ENCODE measurements at regions of chr2 and their contacts with region 1.

Region 1: DNA sequence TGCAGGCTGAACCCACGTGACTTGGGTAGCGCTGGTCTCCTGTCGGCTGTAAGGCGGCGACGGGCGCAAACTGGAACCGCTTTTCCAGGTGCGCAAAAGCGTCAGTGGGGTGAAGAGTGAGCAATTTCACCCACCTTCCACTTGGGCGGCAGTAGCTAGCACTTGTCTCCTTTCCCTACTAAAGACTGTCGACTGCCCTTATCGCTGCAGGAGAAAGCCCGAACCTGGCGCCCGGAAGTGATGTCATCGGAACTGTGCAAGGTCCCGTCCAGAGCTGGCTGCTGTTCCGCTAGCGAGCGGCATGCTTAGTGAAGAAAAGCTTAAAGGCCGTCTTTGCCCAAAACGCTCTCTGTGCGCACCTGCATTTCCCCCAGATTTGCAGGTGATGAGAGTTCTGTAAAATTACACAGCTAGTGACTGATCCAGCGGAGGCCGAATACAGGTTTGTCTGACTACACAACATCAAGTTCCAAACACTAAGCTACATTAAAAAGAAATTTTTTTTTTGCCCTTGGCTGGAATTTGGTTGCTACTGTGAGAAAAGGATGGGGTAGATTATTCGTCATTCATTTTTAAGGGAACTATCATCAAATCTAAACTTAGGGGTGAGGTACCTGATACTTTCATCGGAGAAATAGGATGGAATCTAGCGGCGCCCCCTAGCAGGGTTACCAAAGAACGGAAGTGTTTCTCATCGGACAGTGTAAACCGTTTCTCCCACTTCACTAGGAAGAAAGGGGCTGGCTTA is at the start of gene OSGEPL1:
- DNase-seq: peak; percentile 99
- ATAC-seq: peak; percentile 99
- H3K4me3 ChIP-seq: peak within 1 kb of the TSS; percentile 59 to 86 (median 83)
- H3K27ac ChIP-seq: peak within 1 kb of the TSS; percentile 82
- H3K4me1 ChIP-seq: peaks cover 20% of the 10 kb centered on the region
- H3K27me3 ChIP-seq: no peaks in the 10 kb centered on the region
- CTCF ChIP-seq: peak; percentile 76
- EP300 ChIP-seq: no peak; a peak in 2 of 4 replicates
- POLR2A ChIP-seq: peak; percentile 93 to 97
- RAD21 ChIP-seq: 0 out of 2 replicates have a peak, but pooled peaks have one; percentile 47
- total RNA-seq, gene OSGEPL1: 10.2 and 11.1 TPM in 2 replicates

Region 2: DNA sequence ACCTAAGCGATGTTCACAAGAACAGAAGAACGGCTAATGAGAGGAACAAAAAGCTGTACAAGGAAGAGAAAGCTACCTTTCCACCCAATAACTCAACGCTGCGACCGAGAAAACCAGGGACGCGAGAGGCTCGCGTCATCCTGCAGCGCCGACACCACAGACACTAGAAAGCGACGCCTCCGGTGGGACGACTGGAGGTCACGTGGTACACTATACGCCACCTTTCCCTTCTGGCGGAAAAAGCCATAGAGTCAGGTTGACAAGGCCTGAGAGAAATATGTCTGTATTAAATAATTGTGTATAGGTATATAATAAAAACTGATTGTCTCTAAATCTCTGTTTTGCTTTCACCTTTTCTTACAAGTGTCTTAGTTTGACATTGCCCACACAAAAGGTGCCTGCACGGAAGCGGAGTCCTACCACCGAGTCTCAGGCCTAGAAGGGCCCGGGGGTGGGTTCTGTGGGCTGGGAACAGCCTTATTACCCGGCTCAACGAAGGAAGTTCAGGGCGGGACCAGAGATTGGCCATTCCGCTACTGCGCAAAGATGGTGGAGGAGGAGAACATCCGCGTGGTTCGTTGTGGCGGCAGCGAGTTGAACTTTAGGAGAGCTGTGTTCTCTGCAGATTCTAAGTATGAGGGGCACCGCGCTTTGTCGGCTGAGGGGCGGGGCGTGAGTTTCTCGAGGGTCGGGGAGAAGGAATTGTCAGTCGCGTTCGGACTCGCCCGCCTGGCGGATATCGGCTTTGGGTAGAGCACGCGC is 321.6 kb before region 1 on chr2 and contains the start of gene WDR75:
- CTCF ChIA-PET with region 1: no interaction called
- POLR2A ChIA-PET with region 1: interaction called, 15 read pairs
- in situ Hi-C with region 1: no loop called
- intact Hi-C with region 1: loop called (anchors 2 kb)
- DNase-seq: peak; percentile 95
- ATAC-seq: peak; percentile 99
- H3K4me3 ChIP-seq: peak within 1 kb of the TSS; percentile 90 to 94 (median 93)
- H3K27ac ChIP-seq: peak within 1 kb of the TSS; percentile 82
- H3K4me1 ChIP-seq: peaks cover 45% of the 10 kb centered on the region
- H3K27me3 ChIP-seq: no peaks in the 10 kb centered on the region; a peak in 1 of 5 replicates
- CTCF ChIP-seq: no peak
- EP300 ChIP-seq: peak in 1 of 2 experiments; percentile 52; a peak in 2 of 4 replicates
- POLR2A ChIP-seq: peak; percentile 95
- RAD21 ChIP-seq: peak; percentile 27
- total RNA-seq, gene WDR75: 74.1 and 106 TPM in 2 replicates

Region 3: DNA sequence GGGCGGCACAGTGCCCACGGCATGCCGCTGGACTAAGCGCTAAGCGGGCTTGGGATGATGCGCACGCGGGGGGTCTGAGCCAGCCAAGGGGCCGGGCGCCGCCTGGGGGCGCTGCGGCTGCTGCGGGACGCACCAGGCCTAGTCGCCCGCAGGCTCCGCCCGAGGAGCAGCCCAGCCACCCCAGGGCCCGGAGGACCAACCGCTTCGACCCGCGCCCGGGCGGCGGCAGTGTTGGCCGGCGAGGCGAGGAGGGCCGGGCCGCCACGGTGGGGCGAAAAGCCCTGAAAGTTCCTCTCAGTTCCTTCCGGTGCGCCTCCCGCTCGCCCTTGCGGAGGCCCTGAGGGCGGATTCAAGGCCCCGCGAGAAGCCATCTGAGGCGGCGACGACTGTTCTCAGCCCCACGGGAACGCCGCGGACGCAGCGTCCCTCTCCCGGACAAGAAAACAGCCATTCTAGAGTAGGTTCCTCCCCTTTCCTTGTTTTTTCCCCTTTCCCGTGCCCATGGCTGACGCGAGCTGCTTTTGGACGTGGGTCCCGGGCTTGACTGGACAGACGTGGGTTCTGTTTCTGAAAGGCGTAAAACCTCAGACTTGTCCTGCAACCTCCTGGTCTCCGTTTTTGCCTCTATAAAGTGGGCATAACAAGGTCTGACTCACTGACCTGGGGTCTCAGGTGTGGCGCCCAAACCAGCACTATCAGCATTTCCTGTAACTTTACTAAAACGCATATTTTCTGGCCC is 88.2 kb before region 1 on chr2 and contains the start of gene ANKAR:
- CTCF ChIA-PET with region 1: interaction called, 10 read pairs
- POLR2A ChIA-PET with region 1: interaction called, 23 read pairs
- in situ Hi-C with region 1: loop called (anchors 5 kb)
- intact Hi-C with region 1: loop called (anchors 1 kb)
- DNase-seq: peak; percentile 88
- ATAC-seq: peak; percentile 99
- H3K4me3 ChIP-seq: peak within 1 kb of the TSS; percentile 85 to 93 (median 85)
- H3K27ac ChIP-seq: peak within 1 kb of the TSS; percentile 90
- H3K4me1 ChIP-seq: peaks cover 21% of the 10 kb centered on the region
- H3K27me3 ChIP-seq: no peaks in the 10 kb centered on the region; a peak in 1 of 5 replicates
- CTCF ChIP-seq: peak; percentile 94
- EP300 ChIP-seq: peak in 1 of 2 experiments; percentile 51; a peak in 1 of 4 replicates
- POLR2A ChIP-seq: peak; percentile 80 to 90
- RAD21 ChIP-seq: peak; percentile 97
- total RNA-seq, gene ANKAR: 3.0 and 3.6 TPM in 2 replicates

Region 4: GRCh38 chr2:189698020-189698887 is 64.5 kb before region 1 on chr2:
- CTCF ChIA-PET with region 1: no interaction called
- POLR2A ChIA-PET with region 1: no interaction called
- in situ Hi-C with region 1: no loop called
- intact Hi-C with region 1: loop called (anchors 5 kb)
- DNase-seq: peak; percentile 67
- ATAC-seq: peak; percentile 61; the same call in 2 of the 3 replicates
- H3K4me3 ChIP-seq: no peak overlapping the region
- H3K27ac ChIP-seq: no peak overlapping the region
- H3K4me1 ChIP-seq: no peaks in the 10 kb centered on the region
- H3K27me3 ChIP-seq: no peaks in the 10 kb centered on the region
- CTCF ChIP-seq: peak; percentile 41; the same call in 1 of the 2 replicates
- EP300 ChIP-seq: no peak
- POLR2A ChIP-seq: no peak
- RAD21 ChIP-seq: no peak

Region 5: GRCh38 chr2:189751080-189751658 is 11.6 kb before region 1 on chr2:
- CTCF ChIA-PET with region 1: interaction called, 11 read pairs
- POLR2A ChIA-PET with region 1: interaction called, 4 read pairs
- in situ Hi-C with region 1: no loop called
- intact Hi-C with region 1: no loop called
- DNase-seq: peak; percentile 54
- ATAC-seq: peak; percentile 98
- H3K4me3 ChIP-seq: no peak overlapping the region
- H3K27ac ChIP-seq: no peak overlapping the region
- H3K4me1 ChIP-seq: no peaks in the 10 kb centered on the region
- H3K27me3 ChIP-seq: no peaks in the 10 kb centered on the region
- CTCF ChIP-seq: peak; percentile 84
- EP300 ChIP-seq: 0 out of 4 replicates have a peak, but pooled peaks of 1 of the 2 experiments have one; percentile 8
- POLR2A ChIP-seq: no peak
- RAD21 ChIP-seq: 0 out of 2 replicates have a peak, but pooled peaks have one; percentile 14

Region 6: DNA sequence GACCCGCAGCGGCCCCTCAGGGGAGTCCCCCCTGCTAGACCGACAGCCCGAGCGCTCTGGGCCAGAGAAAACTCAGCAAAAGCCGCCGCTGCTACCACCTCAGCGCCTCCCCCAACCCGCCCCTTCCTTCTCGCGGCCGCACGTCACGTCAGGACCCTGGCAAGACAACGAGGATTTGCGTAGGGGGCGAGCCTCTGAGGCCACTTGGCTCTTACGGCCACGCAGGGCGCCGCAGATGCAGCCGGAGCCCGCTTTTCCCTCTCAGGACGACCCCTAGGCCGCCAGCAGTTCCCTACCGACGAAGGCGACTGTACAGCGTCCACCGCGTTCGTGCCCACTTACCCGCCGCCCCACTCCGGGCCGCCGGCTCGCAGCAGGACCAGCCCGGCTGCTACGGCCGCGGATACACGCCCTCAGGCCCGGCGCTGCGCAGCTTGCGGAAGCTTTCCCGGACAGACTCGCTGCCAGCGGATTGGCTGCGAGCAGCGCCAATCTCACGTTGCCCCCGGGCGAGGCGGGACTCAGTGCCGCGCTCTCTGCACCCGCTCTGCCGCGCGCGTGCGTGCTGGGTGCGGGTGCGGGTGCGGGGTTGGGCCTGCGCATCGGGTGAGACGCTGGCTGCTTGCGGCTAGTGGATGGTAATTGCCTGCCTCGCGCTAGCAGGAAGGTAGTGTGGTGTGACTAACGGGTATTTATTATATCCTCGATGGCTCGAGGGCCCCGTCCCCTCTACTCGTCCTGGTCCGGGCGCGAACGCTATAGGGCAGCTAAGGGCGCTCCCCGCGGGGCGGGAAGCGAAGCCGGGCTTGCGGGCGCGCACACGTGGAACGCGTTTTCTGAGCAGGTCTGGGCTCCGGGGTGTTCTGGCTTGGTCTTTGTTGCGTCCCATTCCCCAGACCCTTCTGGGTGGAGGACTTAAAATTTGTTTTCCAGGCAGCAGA is 21.5 kb after region 1 on chr2 and contains the starts of genes ORMDL1 and PMS1:
- CTCF ChIA-PET with region 1: no interaction called
- POLR2A ChIA-PET with region 1: interaction called, 51 read pairs
- in situ Hi-C with region 1: no loop called
- intact Hi-C with region 1: loop called (anchors 1 kb)
- DNase-seq: peak; percentile 93
- ATAC-seq: peak; percentile 97
- H3K4me3 ChIP-seq: peak within 1 kb of the TSS; percentile 79 to 83 (median 81)
- H3K27ac ChIP-seq: peak within 1 kb of the TSS; percentile 94
- H3K4me1 ChIP-seq: peaks cover 36% of the 10 kb centered on the region
- H3K27me3 ChIP-seq: no peaks in the 10 kb centered on the region; a peak in 1 of 5 replicates
- CTCF ChIP-seq: no peak; the same call in 1 of the 2 replicates
- EP300 ChIP-seq: no peak
- POLR2A ChIP-seq: peak; percentile 95 to 98
- RAD21 ChIP-seq: peak; percentile 39; the same call in 1 of the 2 replicates
- total RNA-seq, gene ORMDL1: 29.5 and 67.5 TPM in 2 replicates
- total RNA-seq, gene PMS1: 39.0 and 39.9 TPM in 2 replicates

Measured in HepG2 (cell line).